ENCODE measurements at regions of chr20 and their contacts with region 1.

Region 1: GRCh38 chr20:8722276-8722928 is 346.5 kb upstream of the PLCB4 start:
- DNase-seq: no peak
- ATAC-seq: peak; percentile 81

Region 2: GRCh38 chr20:7935027-7935551 is 787.3 kb before region 1 on chr20:
- intact Hi-C with region 1: loop called (anchors 10 kb)
- DNase-seq: no peak
- ATAC-seq: no peak

Region 3: DNA sequence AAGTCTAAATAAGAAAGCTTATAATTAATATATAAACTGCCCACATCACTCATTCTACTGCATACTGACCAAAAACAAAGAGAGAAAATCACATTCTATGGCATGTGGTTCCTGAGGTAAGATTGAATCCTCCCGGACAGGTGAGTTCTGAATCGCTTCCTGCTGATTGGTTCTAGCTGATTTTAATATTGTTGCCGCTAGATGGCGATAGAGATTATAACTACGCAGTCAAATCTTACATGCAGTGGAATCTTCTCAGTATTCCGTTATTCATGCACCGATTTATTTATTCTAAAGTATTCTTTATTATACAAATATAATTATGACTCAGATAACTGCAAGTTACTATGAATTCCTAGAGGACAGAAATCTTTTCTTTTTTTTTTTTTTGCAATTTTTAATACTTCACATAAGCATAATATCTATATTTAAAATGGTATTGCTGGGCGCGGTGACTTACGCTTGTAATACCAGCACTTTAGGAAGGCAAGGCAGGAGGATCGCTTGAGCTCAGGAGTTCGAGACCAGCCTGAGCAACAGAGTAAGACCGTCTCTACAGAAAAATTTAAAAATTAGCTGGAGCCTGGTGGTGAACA is 678.6 kb before region 1 on chr20:
- intact Hi-C with region 1: loop called (anchors 2 kb)
- DNase-seq: no peak
- ATAC-seq: peak; percentile 59

Region 4: DNA sequence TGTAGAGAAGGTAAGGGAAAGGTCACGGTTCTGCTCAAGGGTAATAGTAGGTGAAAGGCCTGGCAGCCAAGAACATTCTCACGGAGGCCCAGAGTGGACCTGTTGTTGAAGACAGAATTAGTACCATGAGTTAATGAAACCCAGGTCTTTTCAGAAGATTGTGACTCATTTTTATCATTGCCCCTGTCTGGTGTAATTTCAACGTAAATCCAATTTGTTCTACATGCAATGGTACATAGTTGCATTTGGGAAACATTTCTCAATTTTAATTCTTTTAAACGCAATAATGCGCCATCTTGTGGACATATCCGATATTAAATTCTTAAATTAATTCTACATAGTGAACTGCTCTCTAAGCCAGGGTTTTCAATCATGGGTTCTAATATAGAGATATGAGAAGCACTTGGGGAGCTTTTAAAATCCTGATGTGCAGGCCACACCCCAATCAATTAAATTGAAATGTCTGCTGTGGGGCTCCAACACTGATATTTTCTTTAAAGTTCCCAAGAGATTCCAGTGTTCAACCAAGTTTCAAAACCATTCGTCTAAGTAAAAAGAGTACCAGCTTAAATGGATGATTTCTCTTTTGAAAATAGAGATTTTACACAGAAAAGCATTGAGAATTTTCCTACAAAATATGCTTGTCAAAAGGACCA is 332.9 kb before region 1 on chr20:
- intact Hi-C with region 1: loop called (anchors 5 kb)
- DNase-seq: no peak
- ATAC-seq: peak; percentile 55

Measured in left ventricle myocardium superior (tissue), 1 donor.